ENCODE measurements at regions of chr9 and their contacts with region 1.

Region 1: GRCh38 chr9:21110708-21111576 is 30.7 kb downstream of the IFNW1 start:
- DNase-seq: no peak
- H3K4me3 ChIP-seq: no peak overlapping the region
- H3K27ac ChIP-seq: no peak overlapping the region
- H3K4me1 ChIP-seq: no peaks in the 10 kb centered on the region
- H3K27me3 ChIP-seq: no peaks in the 10 kb centered on the region
- CTCF ChIP-seq: peak; percentile 80

Region 2: DNA sequence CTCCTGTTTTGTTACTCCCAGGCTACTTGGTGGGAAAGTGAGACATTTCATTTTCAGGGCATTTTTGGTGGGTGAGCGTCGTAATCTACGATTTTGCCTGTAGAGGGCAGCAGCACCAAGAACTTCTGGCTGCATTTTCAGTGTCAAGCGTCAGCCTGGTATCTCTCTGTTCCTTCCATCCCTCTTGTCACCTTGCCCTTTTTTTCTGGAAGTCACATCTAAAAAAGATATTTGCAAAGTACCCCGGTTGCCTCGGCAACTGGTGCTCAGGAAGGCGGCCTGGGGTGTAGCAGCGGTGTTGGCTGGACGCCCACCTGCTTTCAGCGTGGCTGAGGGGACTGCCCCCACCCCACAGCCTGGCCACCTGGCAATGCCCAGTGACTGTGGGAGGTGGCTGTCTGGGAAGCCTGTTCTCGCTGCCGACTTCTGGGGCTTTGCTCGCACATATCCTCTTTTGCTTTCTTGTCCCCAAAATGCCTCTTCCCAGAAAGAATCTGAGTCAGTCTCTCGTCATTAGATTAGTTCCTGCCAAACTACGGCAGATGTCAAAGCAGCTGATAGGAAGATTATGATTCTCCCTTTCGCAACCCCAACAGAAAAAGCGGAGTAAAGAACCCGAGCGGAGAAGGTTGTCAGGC is 1617.6 kb before region 1 on chr9:
- intact Hi-C with region 1: loop called (anchors 10 kb)
- DNase-seq: peak; percentile 34
- H3K4me3 ChIP-seq: peak overlapping the region; percentile 6
- H3K27ac ChIP-seq: no peak overlapping the region
- H3K4me1 ChIP-seq: no peaks in the 10 kb centered on the region
- H3K27me3 ChIP-seq: no peaks in the 10 kb centered on the region
- CTCF ChIP-seq: peak; percentile 55

Region 3: GRCh38 chr9:19925817-19926503 is 1185.0 kb before region 1 on chr9:
- intact Hi-C with region 1: loop called (anchors 2 kb)
- DNase-seq: peak; percentile 79
- H3K4me3 ChIP-seq: peak overlapping the region; percentile 14
- H3K27ac ChIP-seq: no peak overlapping the region
- H3K4me1 ChIP-seq: no peaks in the 10 kb centered on the region
- H3K27me3 ChIP-seq: no peaks in the 10 kb centered on the region
- CTCF ChIP-seq: peak; percentile 90

Region 4: DNA sequence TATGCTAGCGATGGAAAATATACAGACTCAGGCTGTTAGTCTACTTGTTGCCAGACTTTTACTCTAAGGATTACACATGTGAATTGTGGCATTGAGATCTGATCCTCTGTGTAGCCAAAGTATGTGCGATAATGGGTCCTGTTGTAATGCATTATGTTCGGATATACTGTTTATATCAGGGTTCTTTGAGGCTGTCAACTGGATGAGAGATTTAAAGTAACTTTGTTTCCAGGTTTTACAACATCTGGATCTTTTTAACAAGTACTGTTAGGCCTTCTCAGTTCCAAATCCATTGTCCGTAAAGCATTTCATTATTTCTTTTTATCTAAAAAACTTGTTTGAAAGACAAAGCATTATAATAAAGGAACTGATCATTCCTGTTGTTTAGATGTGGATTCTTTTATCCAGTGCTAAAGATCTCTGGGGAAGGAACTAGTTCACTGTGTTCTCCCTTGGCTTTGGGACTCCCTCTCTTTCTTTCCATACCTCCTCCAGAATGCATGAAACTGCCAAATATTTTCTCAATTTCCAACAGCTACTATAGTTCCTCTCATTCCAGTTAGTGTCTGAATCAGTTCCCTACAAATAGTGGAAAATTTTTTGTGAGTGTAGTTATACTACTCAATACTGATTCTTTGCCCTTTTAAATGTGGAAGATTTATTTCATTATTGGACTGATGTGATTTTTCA is 148.3 kb before region 1 on chr9:
- intact Hi-C with region 1: loop called (anchors 10 kb)
- DNase-seq: no peak
- H3K4me3 ChIP-seq: no peak overlapping the region
- H3K27ac ChIP-seq: no peak overlapping the region
- H3K4me1 ChIP-seq: no peaks in the 10 kb centered on the region
- H3K27me3 ChIP-seq: no peaks in the 10 kb centered on the region
- CTCF ChIP-seq: no peak